PC-3 (cell line): ENCODE measurements at regions of chr18 and their contacts with region 1.

Region 1: DNA sequence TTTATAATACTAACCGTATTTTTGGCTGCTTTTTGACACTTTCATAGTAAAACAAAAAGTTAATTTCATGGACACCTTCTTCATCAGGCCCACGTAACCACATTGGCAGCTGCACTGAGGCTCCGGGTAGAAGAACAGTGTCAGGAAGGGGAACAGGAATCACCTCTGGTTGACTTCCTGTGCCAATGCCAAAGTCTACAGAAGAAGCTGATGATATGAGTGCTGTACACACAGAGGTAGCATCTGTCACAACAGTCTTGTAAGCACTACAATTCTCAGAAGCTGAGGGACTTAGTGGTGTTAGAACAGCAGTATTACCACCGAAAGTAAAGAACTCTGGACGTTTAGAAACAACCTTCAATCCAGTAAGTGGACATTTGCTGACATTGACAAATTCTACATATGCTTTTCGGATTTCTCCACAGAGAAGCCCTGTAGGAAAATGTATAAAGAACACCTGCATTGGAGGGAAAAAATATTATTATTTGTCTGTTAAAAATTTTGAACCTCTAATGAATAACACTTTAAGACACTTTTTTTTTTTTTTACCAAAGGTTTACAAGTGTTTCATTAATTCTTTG is 85.3 kb downstream of the TRAPPC8 start:
- DNase-seq: no peak
- ATAC-seq: no peak
- H3K4me3 ChIP-seq: no peak overlapping the region
- H3K27ac ChIP-seq: no peak overlapping the region
- H3K4me1 ChIP-seq: no peaks in the 10 kb centered on the region
- H3K27me3 ChIP-seq: no peaks in the 10 kb centered on the region
- CTCF ChIP-seq: no peak

Region 2: GRCh38 chr18:31741097-31741735 is 116.4 kb before region 1 on chr18:
- CTCF ChIA-PET with region 1: no interaction called
- POLR2A ChIA-PET with region 1: no interaction called
- intact Hi-C with region 1: no loop called
- DNase-seq: peak; percentile 47
- ATAC-seq: peak; percentile 20; the same call in 1 of the 2 replicates
- H3K4me3 ChIP-seq: no peak overlapping the region
- H3K27ac ChIP-seq: no peak overlapping the region
- H3K4me1 ChIP-seq: no peaks in the 10 kb centered on the region
- H3K27me3 ChIP-seq: no peaks in the 10 kb centered on the region
- CTCF ChIP-seq: peak; percentile 65

Region 3: DNA sequence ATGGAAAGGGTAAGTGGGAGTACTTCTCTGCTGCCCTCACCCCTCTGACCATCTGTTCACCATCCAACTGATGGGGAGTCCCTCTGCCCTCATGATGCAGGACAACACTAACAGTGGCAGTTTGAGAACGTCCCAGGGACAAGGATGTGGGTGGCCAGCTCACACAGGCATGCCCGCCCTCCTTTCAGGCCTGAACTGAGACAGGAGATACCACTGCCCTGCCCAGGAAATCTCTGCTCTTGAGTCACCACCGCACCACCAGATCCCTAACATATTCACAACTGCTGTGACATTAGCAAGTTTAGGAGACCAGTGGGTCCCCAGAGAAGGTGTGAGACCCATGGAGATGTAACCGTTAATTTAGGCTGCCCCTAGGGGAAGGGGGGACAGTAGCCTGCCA is 19.1 kb after region 1 on chr18:
- CTCF ChIA-PET with region 1: no interaction called
- POLR2A ChIA-PET with region 1: interaction called, 10 read pairs
- intact Hi-C with region 1: no loop called
- DNase-seq: peak; percentile 18
- ATAC-seq: peak; percentile 87
- H3K4me3 ChIP-seq: no peak overlapping the region
- H3K27ac ChIP-seq: no peak overlapping the region
- H3K4me1 ChIP-seq: no peaks in the 10 kb centered on the region
- H3K27me3 ChIP-seq: no peaks in the 10 kb centered on the region
- CTCF ChIP-seq: no peak

Region 4: GRCh38 chr18:31901063-31901462 is 43.4 kb after region 1 on chr18:
- CTCF ChIA-PET with region 1: no interaction called
- POLR2A ChIA-PET with region 1: no interaction called
- intact Hi-C with region 1: loop called (anchors 10 kb)
- DNase-seq: no peak
- ATAC-seq: no peak
- H3K4me3 ChIP-seq: no peak overlapping the region
- H3K27ac ChIP-seq: no peak overlapping the region
- H3K4me1 ChIP-seq: no peaks in the 10 kb centered on the region
- H3K27me3 ChIP-seq: no peaks in the 10 kb centered on the region
- CTCF ChIP-seq: no peak